ENCODE measurements at regions of chr17 and their contacts with region 1.

Region 1: GRCh38 chr17:50161023-50161910 is 4.5 kb upstream of the SGCA start:
- DNase-seq: peak; percentile 83 to 96 (median 91)
- H3K4me3 ChIP-seq: peak overlapping the region; percentile 51 to 84 (median 68)
- H3K27ac ChIP-seq: peak overlapping the region in 56 of 59 donors; percentile 19 to 88 (median 73)
- H3K27me3 ChIP-seq: no peaks in the 10 kb centered on the region
- CTCF ChIP-seq: peak; percentile 88 to 99 (median 97)

Region 2: GRCh38 chr17:50177983-50178834 is 16.9 kb after region 1 on chr17:
- intact Hi-C with region 1: loop called in 1 of 2 experiments (anchors 1 kb)
- DNase-seq: peak in 4 of 10 donors; percentile 39 to 54 (median 43)
- H3K4me3 ChIP-seq: peak overlapping the region in 43 of 59 donors; percentile 1 to 53 (median 26)
- H3K27ac ChIP-seq: peak overlapping the region in 25 of 59 donors; percentile 0 to 92 (median 26)
- H3K27me3 ChIP-seq: no peaks in the 10 kb centered on the region
- CTCF ChIP-seq: peak in 43 of 56 donors; percentile 13 to 69 (median 36)